ENCODE measurements at regions of chr3 and their contacts with region 1.

Region 1: DNA sequence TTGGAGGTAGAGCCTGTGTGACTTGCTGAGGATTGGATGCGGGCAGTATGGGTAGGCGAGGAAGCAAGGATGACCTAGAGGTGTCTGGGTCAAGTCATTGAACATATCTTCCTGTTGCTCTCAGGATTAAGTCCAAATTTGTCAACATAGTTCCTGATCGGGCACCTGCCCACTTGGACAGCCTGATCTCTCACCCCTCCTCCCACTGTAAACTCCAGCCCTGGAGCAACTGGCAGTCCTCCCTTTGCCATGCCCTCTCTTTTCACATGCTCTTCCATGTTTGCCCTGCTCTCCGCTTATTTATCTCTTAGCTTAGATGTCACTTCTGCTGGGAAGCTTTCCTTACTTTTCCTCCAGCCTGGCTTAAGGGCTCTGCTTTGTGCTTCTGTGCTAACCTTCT is 47.6 kb upstream of the PPP4R2 start:
- DNase-seq: no peak
- H3K4me3 ChIP-seq: no peak overlapping the region
- H3K4me1 ChIP-seq: no peaks in the 10 kb centered on the region
- H3K27me3 ChIP-seq: no peaks in the 10 kb centered on the region

Region 2: GRCh38 chr3:71185733-71186455 is 1763.1 kb before region 1 on chr3:
- in situ Hi-C with region 1: no loop called
- DNase-seq: no peak
- H3K4me3 ChIP-seq: no peak overlapping the region
- H3K4me1 ChIP-seq: peaks cover 23% of the 10 kb centered on the region
- H3K27me3 ChIP-seq: no peaks in the 10 kb centered on the region

Region 3: DNA sequence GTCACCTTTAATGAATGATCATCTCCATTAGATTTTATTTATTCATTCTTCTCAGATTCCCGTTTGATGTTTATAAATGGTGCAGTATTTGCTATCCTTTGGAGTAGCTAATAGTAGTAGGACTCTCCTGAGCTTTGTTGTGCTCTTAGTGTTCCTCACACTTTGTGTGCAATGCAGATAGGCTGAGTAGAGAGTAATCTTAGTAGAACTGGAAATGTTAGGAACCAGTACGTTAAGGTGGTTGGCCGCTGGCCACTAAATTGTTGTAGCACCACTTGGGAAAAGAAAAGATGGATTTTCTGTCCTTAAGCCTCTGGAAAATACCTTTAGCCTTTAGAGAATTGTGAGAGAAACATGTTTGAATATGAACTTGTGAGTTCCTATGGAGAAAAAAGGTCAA is 92.5 kb after region 1 on chr3:
- in situ Hi-C with region 1: loop called (anchors 10 kb)
- DNase-seq: peak; percentile 31 to 57
- H3K4me3 ChIP-seq: no peak overlapping the region
- H3K4me1 ChIP-seq: peaks cover 58% of the 10 kb centered on the region
- H3K27me3 ChIP-seq: no peaks in the 10 kb centered on the region

Region 4: DNA sequence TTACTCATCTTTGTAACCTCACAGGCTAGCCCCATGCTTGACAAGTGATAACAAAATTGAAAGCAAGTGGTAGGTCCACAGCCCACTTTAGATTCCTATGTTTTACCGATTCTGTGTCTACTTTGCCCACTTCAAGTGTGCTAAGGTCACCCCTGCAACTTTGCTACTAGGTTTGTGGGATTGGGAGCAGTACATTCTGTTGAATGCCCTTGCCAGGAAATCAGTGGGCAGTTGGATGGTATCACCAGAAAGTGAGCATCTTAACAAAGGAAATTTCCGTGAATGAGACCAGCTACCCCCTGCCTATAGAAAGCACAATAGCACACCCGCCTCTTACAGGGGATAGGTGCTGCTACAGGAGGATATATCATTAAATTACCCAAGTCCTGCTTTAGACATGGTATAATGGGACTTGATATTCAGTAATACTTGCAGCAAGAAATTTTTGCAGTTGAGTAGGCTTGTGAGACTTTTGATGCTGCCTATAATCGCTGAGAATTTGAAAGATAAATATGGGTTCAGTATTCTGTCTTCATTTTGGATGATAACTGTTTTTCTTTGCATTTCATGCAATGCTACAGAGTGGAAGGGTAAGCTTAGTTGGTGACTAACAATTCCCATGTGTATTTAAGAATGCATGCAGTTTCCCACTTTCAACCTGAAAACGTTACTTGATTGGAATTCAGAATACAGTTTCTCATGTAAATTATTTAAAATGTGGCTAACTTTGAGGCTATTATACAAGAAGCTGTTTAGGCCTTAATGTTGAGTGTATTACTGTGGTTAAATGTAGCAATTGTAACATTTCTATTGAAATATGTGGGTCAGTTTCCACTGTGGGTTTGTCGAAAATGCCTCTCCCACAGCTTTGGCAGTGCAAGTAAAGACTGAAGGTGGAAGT is 121.9 kb after region 1 on chr3:
- in situ Hi-C with region 1: loop called (anchors 10 kb)
- DNase-seq: no peak
- H3K4me3 ChIP-seq: no peak overlapping the region
- H3K4me1 ChIP-seq: peaks cover 5% of the 10 kb centered on the region; the same call in 1 of the 2 replicates
- H3K27me3 ChIP-seq: no peaks in the 10 kb centered on the region

Measured in HAP-1 (cell line).